Posterior vena cava (tissue), 2 donors: ENCODE measurements at regions of chr1 and their contacts with region 1.

Region 1: DNA sequence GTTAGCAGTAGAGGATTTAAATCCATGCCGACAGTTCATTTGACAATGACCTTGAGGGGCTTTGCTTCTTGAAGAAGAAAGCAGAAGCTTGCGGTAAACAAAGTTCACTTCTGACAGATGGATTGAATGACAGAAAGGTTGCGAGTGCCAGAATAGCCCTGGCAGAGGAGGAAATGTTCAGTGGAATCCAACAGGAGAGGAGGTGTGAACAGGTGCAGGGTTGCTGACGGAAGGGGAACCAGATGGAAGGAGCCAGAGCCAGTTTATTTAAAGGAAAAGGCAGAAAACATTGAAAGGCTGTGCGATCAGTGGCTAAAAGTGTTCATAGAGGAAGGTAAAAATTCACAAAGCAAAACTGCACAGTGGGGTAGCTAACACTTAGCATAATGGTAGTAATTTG is 141.0 kb downstream of the SDCCAG8 start:
- DNase-seq: no peak

Region 2: GRCh38 chr1:244387415-244387814 is 990.5 kb after region 1 on chr1:
- intact Hi-C with region 1: loop called in 1 of 2 experiments (anchors 2 kb)
- DNase-seq: no peak